ENCODE measurements at regions of chr14 and their contacts with region 1.

Region 1: DNA sequence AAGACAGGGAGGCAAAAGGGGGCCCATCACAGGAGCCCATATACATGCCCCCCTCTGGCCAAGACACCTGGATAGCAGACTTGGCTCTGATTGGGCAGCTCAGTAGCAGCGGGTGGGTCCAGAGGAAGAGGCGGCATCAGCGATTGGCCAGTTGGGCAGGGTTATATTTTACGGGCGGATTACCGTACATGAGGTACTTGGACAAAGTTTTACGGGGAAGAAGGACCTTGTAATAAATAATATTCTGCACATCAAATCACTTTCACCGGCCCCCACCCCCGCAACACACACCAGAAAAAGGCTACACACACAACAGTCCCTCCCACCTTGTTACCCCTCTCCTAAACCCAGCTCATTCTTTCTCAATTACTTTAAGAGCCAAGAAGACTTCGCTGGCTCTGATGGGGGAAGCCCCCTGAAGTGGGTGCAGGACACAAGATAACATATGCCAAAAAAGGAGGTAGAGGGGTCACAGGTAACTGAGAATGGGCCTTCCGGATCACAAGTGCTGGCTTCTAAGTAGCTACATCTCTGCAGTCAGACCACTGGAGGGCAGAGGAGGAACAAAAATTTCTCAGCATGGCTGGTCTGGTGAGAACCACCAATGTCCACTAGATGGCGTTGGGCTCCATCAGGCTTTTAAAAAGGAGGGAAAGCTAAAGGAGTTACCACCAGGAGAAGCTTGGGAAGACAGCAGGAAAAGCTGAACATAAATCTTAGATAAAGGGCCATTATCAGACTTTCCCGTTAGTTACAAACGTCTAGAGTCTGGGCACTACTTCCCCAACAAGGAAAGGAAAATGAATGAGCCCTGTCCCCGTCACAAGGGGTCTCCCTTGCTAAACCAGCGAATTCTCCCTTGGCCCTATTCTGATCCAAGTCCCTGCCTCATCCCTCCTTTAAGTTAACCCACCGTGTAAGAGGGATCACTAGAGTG is 11.4 kb upstream of the CDH24 start:
- DNase-seq: peak; percentile 82
- H3K4me3 Mint-ChIP-seq: no peak overlapping the region
- H3K27ac Mint-ChIP-seq: peak overlapping the region; percentile 66
- H3K4me1 Mint-ChIP-seq: peaks cover 42% of the 10 kb centered on the region
- H3K27me3 Mint-ChIP-seq: no peaks in the 10 kb centered on the region

Region 2: GRCh38 chr14:23006544-23007419 is 62.0 kb before region 1 on chr14:
- CTCF ChIA-PET with region 1: interaction called, 26 read pairs
- POLR2A ChIA-PET with region 1: interaction called, 4 read pairs
- intact Hi-C with region 1: no loop called
- DNase-seq: peak; percentile 99
- H3K4me3 Mint-ChIP-seq: peak overlapping the region; percentile 94
- H3K27ac Mint-ChIP-seq: peak overlapping the region; percentile 96
- H3K4me1 Mint-ChIP-seq: peaks cover 33% of the 10 kb centered on the region
- H3K27me3 Mint-ChIP-seq: no peaks in the 10 kb centered on the region

Region 3: DNA sequence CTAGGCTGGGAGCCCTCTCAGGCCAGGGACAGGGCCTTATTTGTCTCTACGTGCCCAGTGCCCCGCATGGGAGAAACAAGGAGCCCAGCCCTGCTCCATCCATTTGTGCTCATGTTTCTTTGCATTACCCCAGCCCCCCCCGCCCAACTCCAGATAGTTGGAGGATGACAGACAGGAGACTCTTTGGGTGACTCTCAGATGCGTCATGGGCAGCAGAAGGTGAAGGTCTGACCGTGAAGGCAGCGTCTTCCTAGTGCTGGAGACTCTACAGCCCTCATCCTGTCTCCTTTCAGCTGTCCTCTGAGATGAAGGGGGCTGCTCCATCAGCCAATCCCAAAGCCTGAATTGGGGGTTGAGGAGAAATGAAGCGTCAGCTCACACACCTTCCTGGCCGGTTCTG is 27.0 kb before region 1 on chr14:
- CTCF ChIA-PET with region 1: interaction called, 22 read pairs
- POLR2A ChIA-PET with region 1: no interaction called
- intact Hi-C with region 1: no loop called
- DNase-seq: no peak
- H3K4me3 Mint-ChIP-seq: no peak overlapping the region
- H3K27ac Mint-ChIP-seq: no peak overlapping the region
- H3K4me1 Mint-ChIP-seq: no peaks in the 10 kb centered on the region
- H3K27me3 Mint-ChIP-seq: no peaks in the 10 kb centered on the region

Region 4: DNA sequence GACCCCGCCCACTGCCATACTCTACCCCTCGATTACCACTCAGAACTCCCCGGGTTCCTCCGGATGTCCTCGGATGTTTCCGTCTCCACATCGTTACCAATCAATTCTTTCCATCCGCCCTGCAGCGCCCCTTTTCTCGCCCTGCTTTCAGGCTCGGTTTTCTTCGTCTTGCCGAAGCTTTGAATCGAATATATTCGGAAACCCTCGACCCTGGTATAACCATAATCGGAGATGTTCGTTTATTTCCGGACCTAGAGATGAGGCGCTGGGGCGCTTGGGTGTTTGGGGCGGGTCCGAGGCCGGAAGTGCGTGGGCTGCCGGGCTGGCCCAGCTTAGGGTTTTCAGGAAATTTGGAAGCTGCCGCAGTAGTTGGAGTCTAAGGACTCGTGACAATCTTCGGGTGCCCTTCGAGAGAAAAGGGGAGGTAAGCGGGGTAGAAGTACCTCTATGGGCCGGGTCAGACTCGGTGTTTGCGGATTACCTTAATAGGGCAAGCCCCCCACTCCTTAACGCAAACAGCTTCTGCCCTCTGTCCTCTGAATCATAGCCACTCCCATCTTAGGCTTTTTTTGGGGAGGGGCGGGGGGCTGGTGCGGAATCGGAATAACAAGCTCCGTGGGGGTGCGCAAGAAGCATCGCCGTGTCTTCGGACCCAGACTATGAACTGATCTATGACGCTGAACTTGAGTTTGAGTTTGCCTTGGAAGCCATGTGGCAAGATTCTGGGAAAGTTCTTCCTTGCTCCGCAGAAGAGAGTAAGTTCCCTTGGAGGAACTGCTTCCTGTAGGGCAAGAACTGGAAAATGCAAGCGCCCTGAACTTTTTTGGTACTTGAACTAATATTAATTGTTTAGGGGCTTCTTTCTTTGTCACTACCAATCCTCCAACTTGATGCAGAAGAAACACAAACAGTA is 26.7 kb after region 1 on chr14 and contains the start of gene C14orf119:
- CTCF ChIA-PET with region 1: interaction called, 61 read pairs
- POLR2A ChIA-PET with region 1: interaction called, 17 read pairs
- intact Hi-C with region 1: loop called (anchors 1 kb)
- DNase-seq: peak; percentile 100
- H3K4me3 Mint-ChIP-seq: no peak within 1 kb of the TSS
- H3K27ac Mint-ChIP-seq: no peak within 1 kb of the TSS
- H3K4me1 Mint-ChIP-seq: peaks cover 40% of the 10 kb centered on the region
- H3K27me3 Mint-ChIP-seq: no peaks in the 10 kb centered on the region
- total RNA-seq, gene C14orf119: 58.0 to 62.8 TPM

Region 5: GRCh38 chr14:23120541-23121251 is 52.0 kb after region 1 on chr14:
- CTCF ChIA-PET with region 1: interaction called, 31 read pairs
- POLR2A ChIA-PET with region 1: no interaction called
- intact Hi-C with region 1: no loop called
- DNase-seq: peak; percentile 90
- H3K4me3 Mint-ChIP-seq: peak overlapping the region; percentile 9
- H3K27ac Mint-ChIP-seq: peak overlapping the region; percentile 58
- H3K4me1 Mint-ChIP-seq: peaks cover 32% of the 10 kb centered on the region
- H3K27me3 Mint-ChIP-seq: no peaks in the 10 kb centered on the region

Measured in activated CD4-positive, alpha-beta memory T cell treated with anti-CD3 and anti-CD28 coated beads for 36 hours (primary cell).